Posterior vena cava (tissue), 2 donors: ENCODE measurements at regions of chrX and their contacts with region 1.

Region 1: DNA sequence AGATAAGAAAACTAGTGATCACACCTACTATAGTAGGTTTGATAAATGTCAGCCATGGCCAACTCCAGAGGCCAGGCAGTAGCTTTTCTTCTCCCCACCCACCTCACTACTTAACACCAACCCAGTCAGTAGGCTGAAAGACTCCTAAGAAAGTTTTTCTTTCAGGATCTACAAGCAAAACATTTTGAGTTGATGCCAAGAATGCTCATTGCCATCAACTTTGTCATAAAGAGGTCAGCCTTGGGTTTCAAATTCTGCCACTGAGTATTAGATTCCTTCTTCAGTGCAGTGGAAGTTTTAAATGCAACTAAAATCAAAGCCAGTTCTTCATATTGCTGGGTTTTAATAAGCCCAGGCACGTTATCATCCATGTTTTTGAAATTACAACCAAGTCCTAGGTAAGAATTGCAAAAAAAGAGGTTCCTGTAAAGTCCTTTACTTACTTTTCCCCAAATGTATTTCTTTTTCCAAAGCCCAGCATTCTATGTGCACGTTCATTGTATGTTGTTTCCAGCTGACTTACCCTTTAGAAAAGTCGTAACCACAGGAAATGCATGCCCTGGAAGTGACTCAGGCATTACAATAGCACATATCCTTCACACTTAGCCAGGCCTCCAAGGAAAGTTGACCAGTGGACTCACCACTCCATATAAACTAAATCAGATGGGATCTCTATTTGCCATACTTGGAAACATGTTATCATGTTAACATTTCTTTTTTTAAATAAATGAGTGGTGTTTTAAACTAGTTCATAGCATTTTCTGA is 229.9 kb downstream of the SOX3 start:
- DNase-seq: no peak

Region 2: GRCh38 chrX:139864640-139865039 is 410.3 kb before region 1 on chrX:
- intact Hi-C with region 1: loop called in 1 of 2 experiments (anchors 5 kb)
- DNase-seq: no peak

Region 3: GRCh38 chrX:140229187-140229586 is 45.8 kb before region 1 on chrX:
- intact Hi-C with region 1: no loop called
- DNase-seq: no peak

Region 4: GRCh38 chrX:140343226-140343870 is 68.4 kb after region 1 on chrX:
- intact Hi-C with region 1: no loop called
- DNase-seq: no peak